ENCODE measurements at regions of chr4 and their contacts with region 1.

Region 1: DNA sequence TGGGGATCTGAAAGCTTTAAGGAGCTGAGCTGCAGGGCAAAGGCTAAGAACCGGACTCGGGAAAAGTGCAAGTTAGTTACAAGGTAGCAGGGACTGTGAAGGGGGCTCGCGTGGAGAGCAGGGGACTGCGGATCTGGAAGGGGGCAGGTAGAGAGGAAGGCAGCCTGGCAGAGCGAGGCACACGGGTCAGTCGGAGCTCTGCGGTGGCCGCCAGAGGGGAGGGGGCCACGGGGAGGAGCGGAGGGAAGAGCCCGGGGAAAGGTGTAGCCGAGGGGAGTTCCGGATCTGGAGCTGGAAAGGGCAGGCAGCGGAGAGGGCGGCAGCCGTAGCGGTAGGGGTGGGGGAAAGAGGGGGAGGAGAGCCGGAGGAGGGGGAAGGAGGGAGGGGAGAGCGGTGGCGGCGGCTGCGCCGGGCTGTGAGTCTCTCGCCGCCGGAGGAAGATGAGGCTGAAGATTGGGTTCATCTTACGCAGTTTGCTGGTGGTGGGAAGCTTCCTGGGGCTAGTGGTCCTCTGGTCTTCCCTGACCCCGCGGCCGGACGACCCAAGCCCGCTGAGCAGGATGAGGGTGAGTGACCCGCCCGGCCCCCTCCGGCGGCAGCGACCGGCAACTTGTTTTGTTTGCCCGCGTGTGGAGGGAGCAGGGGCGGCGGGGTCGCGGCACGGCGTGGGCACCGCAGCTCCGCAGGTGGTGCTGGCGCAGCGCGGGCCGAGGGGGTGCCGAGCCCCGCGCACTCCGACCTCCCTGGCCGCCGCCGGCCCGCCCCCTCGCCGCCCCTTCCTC is at the start of gene GALNT7:
- DNase-seq: peak; percentile 27 to 71 (median 46)
- ATAC-seq: peak; percentile 68
- H3K4me3 ChIP-seq: peak within 1 kb of the TSS; percentile 76
- H3K4me3 Mint-ChIP-seq: peak within 1 kb of the TSS; percentile 93 to 98 (median 96)
- H3K27ac ChIP-seq: peak within 1 kb of the TSS; percentile 73
- H3K27ac Mint-ChIP-seq: peak within 1 kb of the TSS; percentile 80 to 96 (median 91)
- H3K4me1 ChIP-seq: peaks cover 15 to 23% of the 10 kb centered on the region in 2 donors
- H3K4me1 Mint-ChIP-seq: peaks cover 30 to 61% (median 48%) of the 10 kb centered on the region in 7 donors
- H3K27me3 ChIP-seq: no peaks in the 10 kb centered on the region
- H3K27me3 Mint-ChIP-seq: no peaks in the 10 kb centered on the region
- total RNA-seq, gene GALNT7: 10.2 to 24.1 (median 21.2) TPM

Region 2: GRCh38 chr4:173013232-173013930 is 155.2 kb before region 1 on chr4:
- CTCF ChIA-PET with region 1: interaction called, 5 read pairs
- POLR2A ChIA-PET with region 1: no interaction called
- intact Hi-C with region 1: loop called (anchors 2 kb)
- DNase-seq: peak; percentile 12 to 64 (median 50)
- ATAC-seq: peak; percentile 77
- H3K4me3 ChIP-seq: no peak overlapping the region
- H3K4me3 Mint-ChIP-seq: no peak overlapping the region
- H3K27ac ChIP-seq: no peak overlapping the region
- H3K27ac Mint-ChIP-seq: no peak overlapping the region
- H3K4me1 ChIP-seq: no peaks in the 10 kb centered on the region
- H3K4me1 Mint-ChIP-seq: peaks cover 0 to 4% (median 0%) of the 10 kb centered on the region in 7 donors
- H3K27me3 ChIP-seq: no peaks in the 10 kb centered on the region
- H3K27me3 Mint-ChIP-seq: peaks cover 0 to 5% (median 0%) of the 10 kb centered on the region in 5 donors

Region 3: GRCh38 chr4:173192375-173193162 is 24.0 kb after region 1 on chr4:
- CTCF ChIA-PET with region 1: no interaction called
- POLR2A ChIA-PET with region 1: interaction called, 4 read pairs
- intact Hi-C with region 1: loop called in 1 of 2 experiments (anchors 2 kb)
- DNase-seq: peak in 1 of 9 donors; percentile 7
- ATAC-seq: no peak
- H3K4me3 ChIP-seq: no peak overlapping the region
- H3K4me3 Mint-ChIP-seq: no peak overlapping the region
- H3K27ac ChIP-seq: no peak overlapping the region
- H3K27ac Mint-ChIP-seq: peak overlapping the region in 1 of 9 donors; percentile 17
- H3K4me1 ChIP-seq: peaks cover 0 to 5% of the 10 kb centered on the region in 2 donors
- H3K4me1 Mint-ChIP-seq: peaks cover 21 to 64% (median 46%) of the 10 kb centered on the region in 7 donors
- H3K27me3 ChIP-seq: no peaks in the 10 kb centered on the region
- H3K27me3 Mint-ChIP-seq: no peaks in the 10 kb centered on the region

Region 4: GRCh38 chr4:173264684-173265185 is 96.1 kb after region 1 on chr4:
- CTCF ChIA-PET with region 1: no interaction called
- POLR2A ChIA-PET with region 1: no interaction called
- intact Hi-C with region 1: loop called (anchors 2 to 5 kb)
- DNase-seq: peak in 8 of 9 donors; percentile 8 to 69 (median 57)
- ATAC-seq: peak; percentile 70
- H3K4me3 ChIP-seq: no peak overlapping the region
- H3K4me3 Mint-ChIP-seq: peak overlapping the region in 9 of 10 donors; percentile 38 to 76 (median 61)
- H3K27ac ChIP-seq: no peak overlapping the region
- H3K27ac Mint-ChIP-seq: peak overlapping the region; percentile 6 to 79 (median 45)
- H3K4me1 ChIP-seq: peaks cover 8 to 20% of the 10 kb centered on the region in 2 donors
- H3K4me1 Mint-ChIP-seq: peaks cover 18 to 43% (median 32%) of the 10 kb centered on the region in 7 donors
- H3K27me3 ChIP-seq: no peaks in the 10 kb centered on the region
- H3K27me3 Mint-ChIP-seq: no peaks in the 10 kb centered on the region

Region 5: GRCh38 chr4:173370477-173371291 is 202.1 kb after region 1 on chr4 and contains the start of gene SAP30:
- CTCF ChIA-PET with region 1: no interaction called
- POLR2A ChIA-PET with region 1: no interaction called
- intact Hi-C with region 1: loop called (anchors 1 kb)
- DNase-seq: peak; percentile 88 to 97 (median 91)
- ATAC-seq: peak; percentile 91
- H3K4me3 ChIP-seq: peak within 1 kb of the TSS; percentile 99
- H3K4me3 Mint-ChIP-seq: peak within 1 kb of the TSS; percentile 89 to 100 (median 98)
- H3K27ac ChIP-seq: peak within 1 kb of the TSS; percentile 82
- H3K27ac Mint-ChIP-seq: peak within 1 kb of the TSS; percentile 88 to 99 (median 97)
- H3K4me1 ChIP-seq: peaks cover 5 to 20% of the 10 kb centered on the region in 2 donors
- H3K4me1 Mint-ChIP-seq: peaks cover 14 to 46% (median 18%) of the 10 kb centered on the region in 7 donors
- H3K27me3 ChIP-seq: peaks cover 0 to 10% of the 10 kb centered on the region in 2 donors
- H3K27me3 Mint-ChIP-seq: peaks cover 2 to 29% (median 17%) of the 10 kb centered on the region in 5 donors
- total RNA-seq, gene SAP30: 0.48 to 27.4 (median 1.1) TPM

Region 6: DNA sequence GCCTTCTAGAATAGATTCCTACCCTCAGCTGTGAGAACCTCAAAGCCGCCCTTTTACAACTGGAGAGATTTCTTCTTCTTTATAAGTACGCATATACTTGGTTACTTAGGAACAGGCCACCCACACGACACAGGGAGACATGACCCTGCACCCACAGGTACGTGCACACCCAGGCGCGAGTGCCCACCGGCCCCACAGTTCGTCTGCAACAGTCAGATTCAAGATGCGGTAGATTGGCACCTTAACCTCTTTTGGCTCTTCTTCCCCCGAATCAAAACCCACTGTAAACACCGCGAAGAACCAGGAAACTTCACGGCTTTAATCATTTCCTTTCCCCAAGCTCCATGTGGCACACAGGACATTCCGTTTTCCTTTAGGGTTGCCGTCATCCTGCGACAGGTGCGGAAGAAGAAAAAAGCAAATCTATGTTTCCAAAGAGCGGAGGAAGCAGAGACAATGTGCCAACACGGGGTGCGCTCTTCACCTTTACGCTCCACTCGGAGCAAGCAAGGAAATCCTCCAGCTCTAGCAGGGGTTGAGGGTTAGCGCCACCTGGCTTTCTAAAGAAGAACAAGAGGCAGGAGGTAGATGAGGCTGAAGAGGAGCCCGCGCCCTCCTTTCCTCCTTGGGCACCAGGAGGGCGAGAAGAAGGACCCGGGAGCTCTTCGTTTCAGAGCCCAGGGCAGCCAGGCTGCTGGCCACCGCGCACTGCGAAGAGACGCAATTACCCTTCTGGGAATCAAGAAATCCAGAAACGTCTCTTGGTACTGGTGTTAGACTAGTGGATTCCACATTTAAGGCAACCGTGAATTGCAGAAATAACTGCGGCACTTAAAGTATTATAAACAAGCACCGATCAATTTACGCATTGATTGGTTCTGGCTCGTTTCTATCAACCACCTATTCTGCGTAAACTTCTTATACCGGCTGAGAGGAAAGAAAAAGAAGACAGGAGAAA is 325.7 kb after region 1 on chr4:
- CTCF ChIA-PET with region 1: no interaction called
- POLR2A ChIA-PET with region 1: no interaction called
- intact Hi-C with region 1: loop called in 1 of 2 experiments (anchors 5 kb)
- DNase-seq: peak in 8 of 9 donors; percentile 43 to 71 (median 56)
- ATAC-seq: peak; percentile 96
- H3K4me3 ChIP-seq: peak overlapping the region; percentile 44
- H3K4me3 Mint-ChIP-seq: peak overlapping the region; percentile 74 to 92 (median 85)
- H3K27ac ChIP-seq: no peak overlapping the region
- H3K27ac Mint-ChIP-seq: peak overlapping the region in 1 of 9 donors; percentile 50
- H3K4me1 ChIP-seq: peaks cover 3 to 9% of the 10 kb centered on the region in 2 donors
- H3K4me1 Mint-ChIP-seq: peaks cover 9 to 35% (median 15%) of the 10 kb centered on the region in 7 donors
- H3K27me3 ChIP-seq: no peaks in the 10 kb centered on the region
- H3K27me3 Mint-ChIP-seq: peaks cover 40 to 71% (median 50%) of the 10 kb centered on the region in 5 donors

Measured in naive thymus-derived CD4-positive, alpha-beta T cell (primary cell).